Caco-2 (cell line): ENCODE measurements at regions of chr16 and their contacts with region 1.

Region 1: GRCh38 chr16:53737552-53737951 is 33.6 kb downstream of the FTO start:
- DNase-seq: no peak
- H3K4me3 ChIP-seq: no peak overlapping the region
- H3K4me3 Mint-ChIP-seq: no peak overlapping the region
- H3K27ac Mint-ChIP-seq: no peak overlapping the region
- H3K4me1 ChIP-seq: peaks cover 24% of the 10 kb centered on the region
- H3K4me1 Mint-ChIP-seq: peaks cover 35% of the 10 kb centered on the region
- H3K27me3 ChIP-seq: no peaks in the 10 kb centered on the region
- H3K27me3 Mint-ChIP-seq: no peaks in the 10 kb centered on the region
- CTCF ChIP-seq: no peak

Region 2: DNA sequence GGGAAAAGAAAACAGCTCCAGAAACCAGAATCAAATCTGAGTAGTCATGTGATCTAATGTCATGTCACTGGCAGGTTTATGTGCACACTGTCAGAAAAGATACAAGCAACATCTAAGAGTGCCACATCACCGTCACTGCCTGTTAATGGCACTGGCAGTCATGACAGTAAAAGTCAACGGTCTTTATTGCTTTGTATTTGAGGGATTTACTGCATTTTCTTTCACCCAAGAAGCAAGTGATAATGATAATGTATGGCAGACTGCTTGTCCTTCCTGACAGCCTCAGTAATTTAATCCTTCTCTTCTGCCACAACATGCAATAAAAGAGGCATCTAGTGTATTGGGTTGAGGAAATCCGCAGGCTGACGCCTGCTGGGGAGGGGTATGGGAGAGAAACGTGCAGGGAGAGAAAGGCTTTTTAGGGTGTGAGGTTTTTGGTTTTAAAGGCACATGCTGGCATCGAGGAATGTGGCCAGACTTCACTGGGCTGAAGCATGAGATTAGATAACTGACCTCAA is 126.3 kb before region 1 on chr16:
- CTCF ChIA-PET with region 1: no interaction called
- POLR2A ChIA-PET with region 1: no interaction called
- intact Hi-C with region 1: loop called (anchors 2 kb)
- DNase-seq: peak in 1 of 2 experiments; percentile 29
- H3K4me3 ChIP-seq: no peak overlapping the region
- H3K4me3 Mint-ChIP-seq: peak overlapping the region; percentile 54
- H3K27ac Mint-ChIP-seq: peak overlapping the region; percentile 59
- H3K4me1 ChIP-seq: peaks cover 69% of the 10 kb centered on the region
- H3K4me1 Mint-ChIP-seq: peaks cover 52% of the 10 kb centered on the region
- H3K27me3 ChIP-seq: no peaks in the 10 kb centered on the region
- H3K27me3 Mint-ChIP-seq: no peaks in the 10 kb centered on the region
- CTCF ChIP-seq: no peak

Region 3: GRCh38 chr16:53703590-53704444 is 33.7 kb before region 1 on chr16 and contains the starts of genes FTO and RPGRIP1L:
- CTCF ChIA-PET with region 1: no interaction called
- POLR2A ChIA-PET with region 1: no interaction called
- intact Hi-C with region 1: loop called (anchors 1 kb)
- DNase-seq: peak; percentile 100
- H3K4me3 ChIP-seq: peak within 1 kb of the TSS; percentile 82
- H3K4me3 Mint-ChIP-seq: peak within 1 kb of the TSS; percentile 89
- H3K27ac Mint-ChIP-seq: peak within 1 kb of the TSS; percentile 72
- H3K4me1 ChIP-seq: peaks cover 8% of the 10 kb centered on the region; the same call in 1 of the 2 replicates
- H3K4me1 Mint-ChIP-seq: no peaks in the 10 kb centered on the region
- H3K27me3 ChIP-seq: no peaks in the 10 kb centered on the region
- H3K27me3 Mint-ChIP-seq: no peaks in the 10 kb centered on the region
- CTCF ChIP-seq: no peak
- total RNA-seq, gene FTO: 76.3 and 78.3 TPM in 2 replicates
- total RNA-seq, gene RPGRIP1L: 16.1 and 17.8 TPM in 2 replicates

Region 4: DNA sequence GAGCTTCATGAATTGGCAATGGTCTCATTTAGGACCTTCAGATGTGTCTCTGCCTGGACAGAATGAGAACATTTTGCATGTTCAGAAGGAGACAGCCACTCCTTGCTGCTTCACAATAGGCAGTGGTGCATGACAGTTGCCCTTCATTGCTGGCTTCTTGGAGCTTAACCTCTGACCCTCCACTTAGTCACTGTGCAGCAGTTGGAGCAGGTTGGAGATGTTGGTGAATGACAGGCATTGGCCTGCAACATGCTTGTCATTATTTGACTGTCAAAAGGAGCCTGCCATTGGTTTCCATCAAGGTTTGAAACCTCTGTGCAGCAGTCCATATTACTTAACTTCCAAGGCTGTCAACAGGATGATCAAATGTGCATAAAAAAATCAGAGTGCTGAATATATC is 10.9 kb before region 1 on chr16:
- CTCF ChIA-PET with region 1: no interaction called
- POLR2A ChIA-PET with region 1: no interaction called
- intact Hi-C with region 1: loop called (anchors 1 kb)
- DNase-seq: peak; percentile 56 to 66
- H3K4me3 ChIP-seq: no peak overlapping the region
- H3K4me3 Mint-ChIP-seq: no peak overlapping the region
- H3K27ac Mint-ChIP-seq: peak overlapping the region; percentile 56
- H3K4me1 ChIP-seq: peaks cover 29% of the 10 kb centered on the region
- H3K4me1 Mint-ChIP-seq: peaks cover 49% of the 10 kb centered on the region
- H3K27me3 ChIP-seq: no peaks in the 10 kb centered on the region
- H3K27me3 Mint-ChIP-seq: no peaks in the 10 kb centered on the region
- CTCF ChIP-seq: no peak

Region 5: DNA sequence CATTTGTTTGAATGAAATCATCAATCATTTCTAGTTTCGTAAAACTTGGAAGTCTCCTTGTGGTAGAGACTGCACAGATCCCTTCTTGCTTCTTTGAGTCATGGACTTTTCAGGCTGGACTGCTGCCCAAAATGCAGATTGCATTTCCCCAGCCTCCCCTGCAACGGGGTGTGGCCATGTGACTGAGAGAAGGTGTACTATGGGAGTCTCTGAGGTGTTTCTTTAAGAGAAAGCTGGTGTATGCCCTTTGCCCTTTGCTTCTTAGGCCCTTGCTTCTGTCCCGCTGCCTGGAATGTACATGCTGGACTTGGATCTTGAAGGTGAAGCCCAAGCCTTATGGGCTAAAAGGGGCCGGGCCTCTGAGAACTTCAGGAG is 18.0 kb after region 1 on chr16:
- CTCF ChIA-PET with region 1: interaction called, 37 read pairs
- POLR2A ChIA-PET with region 1: no interaction called
- intact Hi-C with region 1: loop called (anchors 1 kb)
- DNase-seq: peak; percentile 64 to 85
- H3K4me3 ChIP-seq: no peak overlapping the region
- H3K4me3 Mint-ChIP-seq: peak overlapping the region; percentile 17
- H3K27ac Mint-ChIP-seq: peak overlapping the region; percentile 82
- H3K4me1 ChIP-seq: peaks cover 42% of the 10 kb centered on the region
- H3K4me1 Mint-ChIP-seq: peaks cover 50% of the 10 kb centered on the region
- H3K27me3 ChIP-seq: no peaks in the 10 kb centered on the region
- H3K27me3 Mint-ChIP-seq: no peaks in the 10 kb centered on the region
- CTCF ChIP-seq: no peak